Endothelial cell of umbilical vein (primary cell): ENCODE measurements at regions of chr7 and their contacts with region 1.

Region 1: DNA sequence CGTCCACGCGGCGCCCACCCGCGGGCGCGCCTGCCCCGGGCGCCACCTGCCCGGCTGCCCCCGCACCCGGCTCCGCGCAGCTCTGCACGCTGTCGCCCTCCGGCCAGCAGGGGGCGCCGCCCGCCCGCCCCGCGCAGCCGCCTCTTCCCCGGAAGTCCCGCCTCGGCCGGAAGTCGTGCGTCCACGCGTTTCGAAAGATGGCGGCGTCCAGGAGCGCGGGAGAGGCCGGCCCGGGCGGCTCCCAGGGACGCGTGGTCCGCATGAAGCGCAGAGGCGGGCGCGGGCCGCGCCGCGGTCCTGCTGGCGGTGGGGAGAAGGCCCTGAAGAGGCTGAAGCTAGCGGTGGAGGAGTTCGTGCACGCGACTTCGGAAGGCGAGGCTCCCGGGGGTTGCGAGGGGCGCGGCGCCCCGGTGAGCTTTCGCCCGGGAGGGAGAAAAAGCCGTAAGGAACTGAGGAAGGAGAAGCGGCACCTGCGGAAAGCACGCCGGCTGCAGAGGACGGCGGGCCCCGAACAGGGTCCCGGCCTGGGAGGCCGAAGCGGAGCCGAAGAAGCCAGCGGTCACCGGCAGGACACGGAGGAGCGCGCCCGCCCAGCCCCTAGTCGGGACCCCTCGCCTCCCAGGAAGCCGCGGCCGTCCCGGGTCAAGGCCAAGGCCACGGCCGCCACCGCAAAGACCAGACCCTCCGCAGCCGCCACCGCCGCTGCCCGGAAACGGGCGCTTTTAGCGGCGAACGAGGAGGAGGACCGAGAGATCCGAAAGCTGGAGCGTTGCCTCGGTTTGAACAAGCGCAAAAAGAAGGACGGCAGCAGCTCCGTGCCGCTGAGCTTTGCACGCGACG is at the start of gene NOM1:
- DNase-seq: peak; percentile 80
- H3K4me3 ChIP-seq: peak within 1 kb of the TSS; percentile 72 to 92 (median 83)
- H3K27ac ChIP-seq: peak within 1 kb of the TSS; percentile 49
- H3K4me1 ChIP-seq: peaks cover 21% of the 10 kb centered on the region
- H3K27me3 ChIP-seq: peaks cover under 1 to 1% of the 10 kb centered on the region in 2 experiments
- CTCF ChIP-seq: peak; percentile 72 to 79
- POLR2A ChIP-seq: peak; percentile 79
- total RNA-seq, gene NOM1: 36.7 and 38.6 TPM in 2 replicates

Region 2: DNA sequence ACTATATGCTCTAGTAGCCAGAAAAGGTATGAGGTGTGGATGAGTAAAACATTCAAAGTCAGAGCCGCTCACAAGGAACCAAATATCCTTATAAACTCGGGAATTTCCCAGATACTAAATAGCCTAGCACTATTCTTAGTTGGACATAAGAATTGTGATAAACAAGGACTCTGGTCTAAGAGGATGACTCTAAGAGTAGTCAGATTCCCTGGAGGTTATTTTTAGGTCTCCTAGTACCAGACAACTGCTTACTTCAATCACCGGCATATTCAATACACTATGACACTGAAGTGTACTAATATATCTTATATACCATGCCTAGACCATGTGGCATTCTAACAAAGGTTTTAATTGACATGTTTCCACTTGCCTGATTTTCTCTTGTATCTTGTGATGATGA is 113.3 kb before region 1 on chr7:
- CTCF ChIA-PET with region 1: no interaction called
- POLR2A ChIA-PET with region 1: no interaction called
- dilution Hi-C with region 1: no loop called
- intact Hi-C with region 1: loop called (anchors 10 kb)
- DNase-seq: no peak
- H3K4me3 ChIP-seq: no peak overlapping the region
- H3K27ac ChIP-seq: no peak overlapping the region
- H3K4me1 ChIP-seq: no peaks in the 10 kb centered on the region
- H3K27me3 ChIP-seq: no peaks in the 10 kb centered on the region
- CTCF ChIP-seq: no peak
- POLR2A ChIP-seq: no peak

Region 3: DNA sequence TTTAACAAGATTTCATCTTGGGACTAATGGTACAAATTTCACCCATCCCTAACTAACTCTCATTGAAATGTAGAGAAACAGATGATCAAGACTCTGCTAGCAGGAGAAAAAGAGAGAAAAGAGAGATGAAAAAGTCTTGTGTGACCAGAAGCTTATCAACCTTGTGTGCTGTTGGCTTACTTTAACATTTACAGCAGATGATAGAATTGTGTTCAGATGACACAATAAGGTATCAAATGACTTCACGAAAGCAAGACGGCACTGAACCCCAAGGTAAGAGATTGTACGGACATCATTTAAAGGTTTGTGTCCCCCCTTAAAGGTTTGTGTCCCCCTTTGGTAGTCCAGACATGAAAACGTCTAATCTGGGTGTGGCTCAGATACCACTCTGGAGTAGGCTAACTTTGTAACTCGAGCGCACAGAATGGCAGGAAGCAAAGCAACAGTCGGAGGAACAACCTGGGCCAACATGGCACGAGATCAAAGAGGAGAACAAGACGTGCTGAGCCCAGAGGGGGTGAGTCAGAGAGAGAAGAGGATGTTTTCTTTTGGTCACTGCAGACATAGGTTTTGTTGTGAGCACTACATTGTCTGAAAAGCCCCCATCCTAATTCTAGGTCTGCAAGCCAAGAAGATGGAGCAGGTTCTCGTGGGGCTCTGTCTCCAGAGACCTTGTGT is 46.4 kb before region 1 on chr7:
- CTCF ChIA-PET with region 1: interaction called, 17 read pairs
- POLR2A ChIA-PET with region 1: no interaction called
- dilution Hi-C with region 1: no loop called
- intact Hi-C with region 1: no loop called
- DNase-seq: peak; percentile 81
- H3K4me3 ChIP-seq: no peak overlapping the region
- H3K27ac ChIP-seq: peak overlapping the region; percentile 80
- H3K4me1 ChIP-seq: peaks cover 14% of the 10 kb centered on the region
- H3K27me3 ChIP-seq: no peaks in the 10 kb centered on the region
- CTCF ChIP-seq: no peak
- POLR2A ChIP-seq: peak; percentile 34

Region 4: DNA sequence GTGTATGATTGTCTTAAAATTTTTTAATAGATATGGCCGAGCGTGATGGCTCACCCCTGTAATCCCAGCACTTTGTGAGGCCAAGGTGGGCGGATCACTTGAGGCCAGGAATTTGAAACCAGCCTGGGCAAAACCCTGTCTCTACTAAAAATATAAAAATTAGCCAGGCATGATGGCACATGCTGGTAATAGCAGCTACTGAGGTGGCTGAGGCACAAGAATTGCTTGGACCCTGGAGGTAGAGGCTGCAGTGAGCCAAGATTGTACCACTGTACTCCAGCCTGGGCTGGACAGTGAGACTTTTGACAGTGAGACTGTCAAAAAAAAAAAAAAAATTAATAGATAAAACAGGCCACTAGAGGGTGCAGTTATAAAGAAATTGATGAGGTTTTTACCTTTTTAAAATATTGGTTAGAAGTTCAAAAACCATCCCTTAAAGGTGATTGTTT is 20.2 kb after region 1 on chr7:
- CTCF ChIA-PET with region 1: interaction called, 12 read pairs
- POLR2A ChIA-PET with region 1: no interaction called
- dilution Hi-C with region 1: no loop called
- intact Hi-C with region 1: no loop called
- DNase-seq: peak; percentile 15
- H3K4me3 ChIP-seq: no peak overlapping the region
- H3K27ac ChIP-seq: no peak overlapping the region
- H3K4me1 ChIP-seq: no peaks in the 10 kb centered on the region
- H3K27me3 ChIP-seq: no peaks in the 10 kb centered on the region
- CTCF ChIP-seq: peak; percentile 20 to 22
- POLR2A ChIP-seq: no peak

Region 5: DNA sequence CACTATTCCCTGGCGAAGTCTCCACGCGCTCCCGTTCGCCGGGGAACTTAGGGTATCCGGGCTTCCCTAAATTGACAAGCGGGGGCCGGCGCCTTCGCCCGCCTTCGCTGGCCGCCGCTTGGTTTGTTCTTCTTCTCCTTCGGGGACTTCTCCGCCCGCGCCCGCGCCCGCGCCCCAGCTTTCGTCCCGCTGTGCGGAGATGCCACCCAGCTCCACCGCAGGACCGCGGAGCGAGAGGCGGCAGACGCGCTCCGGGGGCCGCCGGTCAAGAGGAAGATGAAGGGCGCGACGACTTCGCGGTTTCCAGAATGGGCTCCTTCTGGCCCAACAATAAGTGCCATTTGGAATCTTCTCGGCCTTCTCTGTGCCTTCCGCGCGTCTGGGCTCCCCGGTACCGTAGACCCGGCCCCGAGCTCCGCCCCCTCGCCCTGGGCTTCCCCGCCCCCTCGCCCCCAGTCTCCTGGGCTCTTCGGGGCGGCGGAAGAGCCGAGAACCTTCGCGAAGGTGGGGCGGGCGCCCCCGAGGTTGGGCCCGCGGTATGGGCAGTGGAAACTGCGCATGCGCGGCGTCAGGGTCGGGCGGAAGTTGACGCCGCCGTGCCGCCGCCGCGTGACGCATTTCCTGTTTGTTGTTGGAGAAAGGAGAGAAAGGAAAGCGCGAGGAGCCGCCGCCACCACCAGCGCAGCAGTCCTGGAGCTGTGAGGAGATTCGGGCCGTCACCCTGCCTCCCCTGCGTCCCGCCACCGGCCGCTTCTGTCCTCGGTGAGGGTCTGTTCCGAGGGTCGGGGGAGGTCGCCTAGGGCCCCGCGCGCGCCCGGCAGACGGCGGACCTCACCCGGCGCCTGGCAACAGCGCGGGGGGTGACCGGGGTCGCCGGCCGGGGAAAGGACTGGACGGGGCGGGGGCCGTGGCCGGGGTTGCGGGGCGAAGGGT is 386.9 kb after region 1 on chr7 and contains the start of gene DNAJB6:
- CTCF ChIA-PET with region 1: interaction called, 4 read pairs
- POLR2A ChIA-PET with region 1: no interaction called
- dilution Hi-C with region 1: no loop called
- intact Hi-C with region 1: loop called (anchors 10 kb)
- DNase-seq: peak; percentile 95
- H3K4me3 ChIP-seq: peak within 1 kb of the TSS; percentile 85 to 96 (median 92)
- H3K27ac ChIP-seq: peak within 1 kb of the TSS; percentile 81
- H3K4me1 ChIP-seq: peaks cover 19% of the 10 kb centered on the region
- H3K27me3 ChIP-seq: peaks cover 2 to 4% of the 10 kb centered on the region in 2 experiments
- CTCF ChIP-seq: no peak
- POLR2A ChIP-seq: peak; percentile 67
- total RNA-seq, gene DNAJB6: 135 and 138 TPM in 2 replicates